ENCODE measurements at regions of chr4 and their contacts with region 1.

Region 1: GRCh38 chr4:170990989-170991589 is 822.1 kb upstream of the GALNTL6 start:
- DNase-seq: peak; percentile 20
- CTCF ChIP-seq: peak; percentile 74

Region 2: DNA sequence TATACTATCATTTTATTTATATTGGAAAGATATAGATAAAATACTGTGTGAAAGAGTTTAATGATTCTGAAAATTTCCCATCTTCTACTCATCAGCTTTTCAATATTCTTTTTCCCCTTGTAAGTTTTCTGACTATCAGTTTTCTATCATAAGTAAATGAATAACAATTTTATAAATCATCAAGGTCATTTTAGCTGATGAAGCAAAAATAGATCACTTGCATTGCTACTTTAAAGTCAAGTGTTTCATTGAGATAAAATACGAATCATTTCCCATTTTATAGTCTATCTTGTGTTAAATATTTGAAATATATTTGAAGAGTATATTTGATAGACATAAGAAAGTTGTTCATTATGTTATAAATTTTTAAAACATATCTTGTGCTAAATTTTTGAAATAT is 11.2 kb after region 1 on chr4:
- CTCF ChIA-PET with region 1: interaction called, 14 read pairs
- POLR2A ChIA-PET with region 1: no interaction called
- DNase-seq: no peak
- CTCF ChIP-seq: no peak

Region 3: DNA sequence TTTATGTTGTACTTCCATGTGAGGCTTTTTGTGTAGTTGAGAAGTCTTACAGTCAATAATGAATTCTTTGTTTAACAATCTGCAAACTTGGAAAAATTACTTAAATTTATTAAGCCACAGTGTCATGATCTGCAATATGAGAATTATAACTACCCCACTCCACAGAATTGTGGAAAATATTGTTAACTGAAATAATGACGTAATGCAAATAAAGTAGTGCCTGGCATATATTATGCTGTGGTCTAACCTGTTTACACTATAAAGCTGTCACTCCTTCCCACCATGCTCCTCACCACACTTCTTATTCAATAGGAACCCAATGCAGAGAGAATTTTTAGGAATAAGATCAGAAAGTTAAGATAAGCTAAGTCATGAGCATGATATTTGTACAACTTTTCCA is 190.0 kb after region 1 on chr4:
- CTCF ChIA-PET with region 1: no interaction called
- POLR2A ChIA-PET with region 1: no interaction called
- DNase-seq: no peak
- CTCF ChIP-seq: no peak

Region 4: GRCh38 chr4:171650543-171650942 is 659.5 kb after region 1 on chr4:
- CTCF ChIA-PET with region 1: interaction called, 21 read pairs
- POLR2A ChIA-PET with region 1: no interaction called
- DNase-seq: peak; percentile 45
- CTCF ChIP-seq: peak; percentile 34

Measured in GM10248 (cell line).